ENCODE measurements at regions of chr1 and their contacts with region 1.

Region 1: GRCh38 chr1:202315576-202316168 is 26.1 kb downstream of the UBE2T start:
- DNase-seq: peak; percentile 90
- H3K4me3 ChIP-seq: no peak overlapping the region
- H3K27ac ChIP-seq: no peak overlapping the region
- H3K4me1 ChIP-seq: no peaks in the 10 kb centered on the region
- H3K27me3 ChIP-seq: no peaks in the 10 kb centered on the region
- CTCF ChIP-seq: peak; percentile 71 to 78 (median 73)
- POLR2A ChIP-seq: no peak

Region 2: DNA sequence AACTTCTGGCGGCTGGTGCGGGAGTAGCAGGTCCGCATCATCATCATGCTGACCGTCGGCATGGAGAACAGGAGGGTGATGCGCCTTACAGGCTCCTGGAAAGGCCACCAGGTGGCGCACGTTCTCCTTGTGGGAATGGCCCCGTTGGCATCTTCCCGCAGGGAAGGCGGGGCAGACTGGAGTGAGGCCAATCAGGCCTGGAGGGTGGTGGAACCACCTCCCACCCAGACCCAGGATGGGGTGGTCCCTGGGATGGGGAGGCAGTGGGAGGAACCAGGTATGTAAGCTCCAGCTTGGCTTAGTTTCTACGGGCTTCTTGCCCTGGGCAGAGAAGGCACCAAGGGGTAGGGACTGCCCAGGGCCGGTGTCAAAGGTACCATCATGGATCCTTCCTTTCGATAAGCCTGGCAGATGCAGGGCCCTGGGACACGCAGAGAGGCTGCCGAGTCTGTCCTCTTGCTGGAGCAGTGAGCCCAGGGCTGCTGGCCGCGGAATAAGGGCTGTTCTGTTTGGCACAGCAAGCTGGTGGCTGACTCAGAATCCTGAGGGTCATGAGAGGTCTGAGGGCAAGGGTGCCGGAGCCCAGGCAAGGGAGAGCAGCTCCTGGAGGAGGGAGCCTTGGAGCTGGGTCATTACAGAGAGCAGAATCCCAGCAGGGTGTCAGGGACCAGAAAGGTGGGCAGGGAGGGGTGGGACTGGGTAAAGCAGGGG is 130.8 kb before region 1 on chr1:
- intact Hi-C with region 1: loop called (anchors 5 kb)
- DNase-seq: peak; percentile 90
- H3K4me3 ChIP-seq: no peak overlapping the region
- H3K27ac ChIP-seq: no peak overlapping the region
- H3K4me1 ChIP-seq: no peaks in the 10 kb centered on the region
- H3K27me3 ChIP-seq: no peaks in the 10 kb centered on the region
- CTCF ChIP-seq: peak; percentile 56 to 76 (median 65)
- POLR2A ChIP-seq: no peak

Region 3: GRCh38 chr1:202199265-202199889 is 116.3 kb before region 1 on chr1:
- intact Hi-C with region 1: loop called (anchors 5 kb)
- DNase-seq: no peak
- H3K4me3 ChIP-seq: no peak overlapping the region
- H3K27ac ChIP-seq: no peak overlapping the region
- H3K4me1 ChIP-seq: no peaks in the 10 kb centered on the region
- H3K27me3 ChIP-seq: no peaks in the 10 kb centered on the region
- CTCF ChIP-seq: no peak
- POLR2A ChIP-seq: no peak